ENCODE measurements at regions of chr17 and their contacts with region 1.

Region 1: GRCh38 chr17:57142925-57143324 is 57.9 kb downstream of the AKAP1 start:
- DNase-seq: peak in 1 of 2 donors; percentile 13
- ATAC-seq: peak in 2 of 8 donors; percentile 30 to 42
- H3K4me3 ChIP-seq: no peak overlapping the region
- H3K27ac ChIP-seq: no peak overlapping the region
- H3K4me1 ChIP-seq: peaks cover 0 to 6% (median 0%) of the 10 kb centered on the region in 9 donors
- H3K27me3 ChIP-seq: peaks cover 0 to 3% (median 0%) of the 10 kb centered on the region in 7 donors
- CTCF ChIP-seq: no peak

Region 2: DNA sequence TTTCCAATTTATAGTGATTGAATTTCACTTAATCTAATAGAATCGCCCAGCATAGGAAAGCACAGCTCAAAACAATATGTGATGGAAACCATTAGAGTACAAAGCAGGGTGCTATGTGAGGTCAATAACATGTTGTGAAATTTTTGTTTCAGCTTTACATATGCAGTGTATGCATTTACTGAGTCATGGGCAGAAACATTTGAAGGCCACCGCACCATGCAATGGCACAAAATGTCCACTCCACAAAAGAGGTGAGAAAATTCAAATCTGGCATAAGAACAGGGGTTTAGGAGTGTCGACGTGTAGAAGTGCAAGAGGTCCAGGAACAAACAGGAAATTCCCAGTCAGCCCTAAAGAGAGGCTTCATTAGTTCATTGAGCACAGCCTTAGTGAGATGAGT is 858.4 kb before region 1 on chr17:
- intact Hi-C with region 1: no loop called
- DNase-seq: no peak
- ATAC-seq: no peak
- H3K4me3 ChIP-seq: no peak overlapping the region
- H3K27ac ChIP-seq: no peak overlapping the region
- H3K4me1 ChIP-seq: no peaks in the 10 kb centered on the region
- H3K27me3 ChIP-seq: no peaks in the 10 kb centered on the region
- CTCF ChIP-seq: no peak

Region 3: GRCh38 chr17:56528696-56529095 is 614.2 kb before region 1 on chr17:
- intact Hi-C with region 1: loop called in 1 of 10 experiments (anchors 5 kb)
- DNase-seq: no peak
- ATAC-seq: no peak
- H3K4me3 ChIP-seq: no peak overlapping the region
- H3K27ac ChIP-seq: no peak overlapping the region
- H3K4me1 ChIP-seq: no peaks in the 10 kb centered on the region
- H3K27me3 ChIP-seq: peaks cover 0 to 25% (median 12%) of the 10 kb centered on the region in 7 donors
- CTCF ChIP-seq: no peak

Region 4: DNA sequence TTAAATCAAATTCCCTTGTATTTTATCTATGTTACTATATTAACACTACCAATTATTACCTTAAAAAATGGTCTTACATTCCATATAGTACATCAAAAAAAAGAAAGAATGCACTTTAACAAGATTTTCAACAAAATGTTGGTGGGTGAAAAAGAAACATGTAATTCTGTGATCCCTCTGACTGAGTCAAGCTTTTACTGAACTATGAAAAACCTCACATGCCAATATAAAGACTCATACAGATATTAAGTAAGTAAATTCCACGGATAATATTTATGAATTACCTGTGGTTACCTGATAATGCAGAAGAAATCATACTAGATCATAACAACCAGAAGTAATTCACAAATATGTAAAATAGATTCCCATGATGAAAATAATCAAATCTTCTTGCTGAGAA is 194.4 kb before region 1 on chr17:
- intact Hi-C with region 1: no loop called
- DNase-seq: no peak
- ATAC-seq: no peak
- H3K4me3 ChIP-seq: no peak overlapping the region
- H3K27ac ChIP-seq: no peak overlapping the region
- H3K4me1 ChIP-seq: peaks cover 0 to 5% (median 0%) of the 10 kb centered on the region in 9 donors
- H3K27me3 ChIP-seq: no peaks in the 10 kb centered on the region
- CTCF ChIP-seq: no peak

Region 5: DNA sequence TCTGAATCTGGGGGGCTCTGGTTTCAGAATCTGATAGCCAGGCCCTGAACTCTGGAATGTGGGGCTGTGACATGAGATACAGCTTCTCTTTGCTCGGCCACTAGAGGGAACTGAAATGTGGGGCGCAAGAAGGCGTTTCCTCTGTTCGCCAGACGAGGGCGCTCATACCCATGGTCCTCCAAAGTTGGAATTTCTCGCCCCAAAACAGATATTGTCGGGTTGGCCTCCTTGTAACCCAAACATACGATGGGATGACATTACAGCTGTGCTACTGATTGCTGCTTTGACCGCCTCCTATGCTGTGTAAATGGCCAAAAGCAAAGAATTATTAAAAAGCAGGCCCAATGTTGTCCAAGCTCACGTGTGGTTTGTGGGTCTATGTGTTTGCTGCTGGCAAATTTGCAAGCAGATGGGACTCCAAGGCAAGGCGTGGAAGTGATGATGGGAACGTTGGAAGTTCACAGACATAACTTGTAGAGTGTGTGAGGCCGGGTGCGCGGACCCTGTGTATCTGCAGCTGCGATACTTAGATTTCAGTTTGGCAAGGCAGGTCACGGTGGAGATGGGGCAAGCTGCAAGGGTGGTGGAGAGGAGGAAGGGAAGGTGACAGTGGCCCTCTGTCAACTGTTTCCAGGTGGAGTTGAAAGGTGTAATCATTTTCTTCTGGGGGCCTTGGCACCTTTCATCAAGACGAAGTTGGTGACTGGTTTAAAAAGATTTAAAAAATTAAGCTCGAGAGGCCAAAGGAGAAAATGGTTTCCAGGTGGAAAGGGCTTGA is 100.4 kb after region 1 on chr17:
- intact Hi-C with region 1: no loop called
- DNase-seq: peak; percentile 63 to 67
- ATAC-seq: peak; percentile 37 to 86 (median 72)
- H3K4me3 ChIP-seq: no peak overlapping the region
- H3K27ac ChIP-seq: peak overlapping the region in 4 of 10 donors; percentile 19 to 37 (median 27)
- H3K4me1 ChIP-seq: peaks cover 0 to 17% (median 13%) of the 10 kb centered on the region in 9 donors
- H3K27me3 ChIP-seq: no peaks in the 10 kb centered on the region
- CTCF ChIP-seq: peak; percentile 97 to 99 (median 98)

Region 6: DNA sequence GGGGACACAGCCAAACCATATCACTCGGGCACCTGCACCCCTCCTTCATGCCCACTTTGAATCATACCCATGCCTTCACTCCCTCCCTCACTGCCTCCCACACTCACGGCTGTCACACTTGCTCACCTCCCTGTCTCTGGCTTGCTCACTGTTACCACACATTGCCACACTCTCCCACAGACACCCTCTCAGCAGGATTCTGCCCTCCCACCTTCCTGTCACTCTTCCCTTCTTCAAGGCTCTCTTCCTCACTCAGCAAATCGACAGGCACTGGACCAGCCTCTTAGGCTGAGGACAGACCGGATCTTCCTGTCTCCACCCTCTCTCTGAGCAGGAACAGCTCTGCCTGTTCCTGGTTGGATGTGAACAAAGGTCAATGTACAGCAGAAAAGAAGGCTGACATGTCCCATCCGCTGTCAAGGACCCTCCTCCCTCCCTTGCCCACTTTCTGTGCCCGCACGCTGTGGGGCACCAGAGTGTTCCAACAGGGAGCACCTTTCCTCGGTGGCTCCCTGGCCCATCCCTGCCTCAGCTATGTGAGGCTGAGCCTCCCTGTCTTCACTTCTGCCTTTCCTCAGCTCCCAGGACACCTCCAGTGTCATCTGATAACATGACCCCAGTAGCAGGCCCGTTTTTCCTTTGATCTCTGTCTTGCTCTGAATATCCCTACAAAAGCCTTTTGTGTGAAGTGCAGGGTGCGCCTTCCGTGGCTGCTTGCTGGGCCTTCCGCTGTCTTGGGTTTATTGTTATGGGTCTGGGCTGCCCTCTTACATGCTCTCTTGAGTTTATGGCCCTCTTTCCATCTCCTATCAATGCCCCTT is 555.2 kb after region 1 on chr17:
- intact Hi-C with region 1: loop called in 1 of 10 experiments (anchors 10 kb)
- DNase-seq: no peak
- ATAC-seq: no peak
- H3K4me3 ChIP-seq: no peak overlapping the region
- H3K27ac ChIP-seq: no peak overlapping the region
- H3K4me1 ChIP-seq: peaks cover 0 to 3% (median 0%) of the 10 kb centered on the region in 9 donors
- H3K27me3 ChIP-seq: no peaks in the 10 kb centered on the region
- CTCF ChIP-seq: no peak